Mucosa of descending colon (tissue), 3 donors: ENCODE measurements at regions of chr4 and their contacts with region 1.

Region 1: GRCh38 chr4:140595065-140595464 is 26.3 kb upstream of the UCP1 start:
- DNase-seq: peak in 2 of 3 donors; percentile 32 to 58
- ATAC-seq: peak; percentile 95
- H3K4me3 ChIP-seq: no peak overlapping the region
- H3K4me1 ChIP-seq: no peaks in the 10 kb centered on the region
- CTCF ChIP-seq: no peak

Region 2: DNA sequence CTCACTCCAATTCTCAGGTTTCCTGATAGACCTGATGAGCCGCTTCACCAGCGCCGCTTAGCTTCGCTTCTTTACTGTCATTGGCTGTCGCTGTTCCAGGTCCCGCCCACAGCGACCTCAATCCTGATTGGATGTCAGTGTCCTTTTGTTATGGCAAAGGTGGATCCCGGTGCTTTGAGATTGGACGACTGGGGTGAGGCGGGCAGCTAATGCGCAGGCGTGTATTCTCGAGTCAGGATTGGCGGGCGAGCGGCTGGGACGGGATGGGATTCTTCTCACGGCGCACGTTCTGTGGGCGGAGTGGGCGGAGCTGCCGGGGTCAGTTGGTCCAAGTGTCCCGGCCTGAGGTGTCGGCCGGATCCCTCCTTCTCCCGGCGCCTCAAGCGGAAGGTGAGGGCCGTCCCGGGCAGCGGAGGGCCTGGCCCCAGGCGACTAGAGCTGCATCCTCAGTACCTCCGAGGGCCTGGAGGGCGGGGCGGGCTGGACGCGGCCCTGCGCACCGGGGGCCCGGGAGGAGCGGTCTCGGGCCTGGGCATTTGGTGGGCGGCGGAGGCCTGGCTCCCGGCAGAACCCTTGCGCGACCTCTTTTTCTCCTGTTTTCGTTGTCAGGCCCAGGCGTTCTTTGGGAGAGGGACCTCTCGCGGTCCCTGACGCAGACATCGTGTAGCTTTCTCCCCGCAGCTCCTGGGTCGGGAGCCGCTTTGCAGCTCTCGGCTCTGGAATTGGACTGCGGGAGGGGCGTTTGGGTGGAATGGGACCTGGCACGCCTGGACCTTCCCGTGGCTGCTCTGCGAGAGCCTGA is 221.5 kb before region 1 on chr4 and contains the start of gene SCOC:
- intact Hi-C with region 1: no loop called
- DNase-seq: peak; percentile 99 to 100 (median 99)
- ATAC-seq: peak; percentile 98
- H3K4me3 ChIP-seq: peak within 1 kb of the TSS; percentile 59
- H3K4me1 ChIP-seq: peaks cover 8% of the 10 kb centered on the region
- CTCF ChIP-seq: no peak
- total RNA-seq, gene SCOC: 41.1 to 52.8 (median 51.3) TPM

Region 3: DNA sequence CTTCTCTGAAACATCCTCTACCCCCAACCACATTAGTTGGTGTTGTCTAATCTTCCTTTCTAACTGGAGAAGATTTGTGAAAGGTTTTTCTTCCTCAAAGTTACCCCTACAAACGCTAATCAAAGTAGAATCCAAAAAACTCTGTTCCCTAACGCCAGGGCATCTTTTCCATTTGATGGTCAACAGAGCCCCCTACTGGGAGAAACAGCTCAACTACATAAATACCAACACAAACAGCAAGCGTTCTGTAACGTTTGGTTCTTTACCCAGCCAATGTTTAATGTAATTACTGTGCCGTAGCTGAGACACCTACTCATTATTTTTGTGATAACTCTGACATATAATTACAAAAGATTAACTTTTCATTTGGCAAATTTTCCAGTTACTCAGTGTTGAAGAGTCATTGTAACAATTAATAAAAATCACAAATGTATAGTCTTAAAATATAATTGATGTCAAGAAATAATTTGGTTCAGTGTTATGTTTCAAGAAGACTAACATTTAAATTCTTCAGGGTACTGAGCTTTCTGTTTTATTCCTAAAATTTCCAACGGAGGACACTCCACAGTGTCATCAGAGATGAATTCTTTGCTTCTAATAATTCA is 256.1 kb after region 1 on chr4:
- intact Hi-C with region 1: loop called in 1 of 2 experiments (anchors 5 kb)
- DNase-seq: peak in 1 of 3 donors; percentile 82
- ATAC-seq: peak; percentile 69
- H3K4me3 ChIP-seq: no peak overlapping the region
- H3K4me1 ChIP-seq: no peaks in the 10 kb centered on the region
- CTCF ChIP-seq: peak; percentile 24